Lower leg skin (tissue), 4 donors: ENCODE measurements at regions of chr9 and their contacts with region 1.

Region 1: GRCh38 chr9:110476251-110476650 is 103.3 kb downstream of the SVEP1 start:
- DNase-seq: no peak
- H3K4me3 ChIP-seq: no peak overlapping the region
- CTCF ChIP-seq: no peak
- POLR2A ChIP-seq: no peak

Region 2: DNA sequence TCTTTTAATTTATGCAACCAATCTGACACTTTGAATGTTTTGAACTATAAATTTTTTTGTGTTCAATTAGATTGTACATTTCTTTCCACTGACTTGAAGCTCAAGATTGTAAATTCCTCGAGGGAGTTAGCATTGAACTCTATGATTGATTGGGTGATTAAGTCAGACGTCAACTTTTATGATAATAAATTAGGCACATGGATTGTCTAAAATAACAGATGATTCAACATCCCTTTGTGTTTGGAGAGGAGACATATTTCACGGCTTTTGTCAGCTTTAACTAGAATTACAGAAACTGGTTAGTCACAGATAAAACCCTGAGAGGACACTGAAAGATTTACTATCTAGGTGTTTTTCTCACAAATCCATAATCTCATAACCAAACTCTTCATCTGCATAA is 105.9 kb before region 1 on chr9:
- intact Hi-C with region 1: loop called (anchors 5 kb)
- DNase-seq: no peak
- H3K4me3 ChIP-seq: no peak overlapping the region
- CTCF ChIP-seq: no peak
- POLR2A ChIP-seq: no peak

Region 3: DNA sequence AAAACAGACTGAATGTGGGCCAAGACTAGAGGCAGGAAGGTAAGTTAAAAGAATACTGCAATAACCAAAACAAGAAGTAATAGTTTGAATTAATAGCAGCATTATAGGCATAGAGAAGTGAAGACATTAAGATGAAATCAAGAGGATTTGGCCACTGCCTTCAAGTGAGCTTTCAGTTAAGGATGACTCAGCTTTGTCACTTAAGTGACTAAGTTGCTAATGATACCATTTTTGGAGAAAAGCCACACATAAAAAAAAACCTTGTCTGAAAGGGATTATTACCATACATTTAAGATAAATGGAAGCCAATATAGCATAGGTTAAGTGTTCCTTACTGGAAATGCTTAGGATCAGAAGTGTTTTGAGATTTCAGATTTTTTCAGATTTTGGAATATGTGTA is 950.9 kb after region 1 on chr9:
- intact Hi-C with region 1: no loop called
- DNase-seq: no peak
- H3K4me3 ChIP-seq: no peak overlapping the region
- CTCF ChIP-seq: no peak
- POLR2A ChIP-seq: no peak